ENCODE measurements at regions of chr19 and their contacts with region 1.

Region 1: GRCh38 chr19:9538183-9539058 is at the start of gene ZNF426:
- DNase-seq: peak; percentile 62 to 91 (median 80)
- ATAC-seq: peak; percentile 94
- H3K4me3 ChIP-seq: peak within 1 kb of the TSS; percentile 78
- H3K4me3 Mint-ChIP-seq: peak within 1 kb of the TSS; percentile 95
- H3K27ac ChIP-seq: peak within 1 kb of the TSS; percentile 64 to 84
- H3K27ac Mint-ChIP-seq: peak within 1 kb of the TSS; percentile 98
- H3K4me1 ChIP-seq: peaks cover 16% of the 10 kb centered on the region
- H3K4me1 Mint-ChIP-seq: peaks cover 32% of the 10 kb centered on the region
- H3K27me3 ChIP-seq: no peaks in the 10 kb centered on the region
- H3K27me3 Mint-ChIP-seq: no peaks in the 10 kb centered on the region
- CTCF ChIP-seq: no peak
- total RNA-seq, gene ZNF426: 14.9 to 15.3 TPM

Region 2: DNA sequence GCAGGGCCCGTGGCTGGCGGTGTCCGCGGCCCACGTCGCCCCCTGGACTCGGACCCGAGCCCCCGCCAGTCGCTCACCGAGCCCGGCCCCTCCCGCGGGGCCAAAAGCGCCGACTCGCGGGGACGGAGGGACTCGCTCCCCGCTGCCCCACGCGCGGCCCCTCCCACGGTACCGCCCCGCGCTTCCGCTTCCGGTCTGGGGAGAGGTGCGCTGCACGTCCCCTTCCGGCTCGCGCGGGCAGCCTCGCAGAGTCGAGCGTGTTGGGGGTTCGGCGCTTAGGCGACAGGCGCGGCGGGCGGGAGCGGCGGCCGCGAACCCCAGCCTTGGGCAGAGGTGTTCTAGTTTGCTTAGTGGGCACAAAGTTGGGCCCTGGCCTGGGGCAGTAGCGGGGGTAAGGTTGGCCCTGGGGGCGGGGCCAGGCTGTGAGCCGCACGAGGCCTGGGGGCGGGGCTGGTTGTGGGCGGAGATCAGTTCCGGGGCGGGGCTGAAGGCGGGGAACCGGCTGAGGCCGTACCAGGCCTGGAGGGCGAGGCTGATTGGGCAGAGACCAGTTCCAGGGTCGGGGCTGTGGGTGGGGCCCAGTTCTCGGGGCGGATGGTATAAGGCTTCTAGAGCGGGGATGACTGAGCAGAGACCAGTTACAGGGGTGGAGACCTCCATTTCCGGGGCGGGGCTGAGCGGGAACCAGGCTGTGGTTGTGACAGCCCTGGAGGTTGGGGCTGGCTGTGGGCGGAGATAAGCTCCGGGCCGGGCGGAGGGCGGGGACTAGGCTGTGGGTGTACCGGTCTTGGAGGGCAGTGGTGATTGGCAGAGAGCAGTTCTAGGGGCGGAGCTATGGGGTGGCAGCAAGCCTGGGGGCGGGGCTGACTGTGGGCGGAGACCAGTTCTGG is 706.0 kb before region 1 on chr19 and contains the starts of genes MBD3L1 and ZNF558:
- CTCF ChIA-PET with region 1: no interaction called
- POLR2A ChIA-PET with region 1: no interaction called
- intact Hi-C with region 1: loop called in 1 of 2 experiments (anchors 5 kb)
- DNase-seq: peak; percentile 95 to 100 (median 99)
- ATAC-seq: peak; percentile 88
- H3K4me3 ChIP-seq: peak within 1 kb of the TSS; percentile 90
- H3K4me3 Mint-ChIP-seq: peak within 1 kb of the TSS; percentile 97
- H3K27ac ChIP-seq: peak within 1 kb of the TSS; percentile 89 to 92
- H3K27ac Mint-ChIP-seq: peak within 1 kb of the TSS; percentile 95
- H3K4me1 ChIP-seq: peaks cover 15% of the 10 kb centered on the region
- H3K4me1 Mint-ChIP-seq: peaks cover 31% of the 10 kb centered on the region
- H3K27me3 ChIP-seq: no peaks in the 10 kb centered on the region
- H3K27me3 Mint-ChIP-seq: no peaks in the 10 kb centered on the region
- CTCF ChIP-seq: peak; percentile 48
- total RNA-seq, gene MBD3L1: not detected
- total RNA-seq, gene ZNF558: 22.2 to 23.3 TPM

Region 3: DNA sequence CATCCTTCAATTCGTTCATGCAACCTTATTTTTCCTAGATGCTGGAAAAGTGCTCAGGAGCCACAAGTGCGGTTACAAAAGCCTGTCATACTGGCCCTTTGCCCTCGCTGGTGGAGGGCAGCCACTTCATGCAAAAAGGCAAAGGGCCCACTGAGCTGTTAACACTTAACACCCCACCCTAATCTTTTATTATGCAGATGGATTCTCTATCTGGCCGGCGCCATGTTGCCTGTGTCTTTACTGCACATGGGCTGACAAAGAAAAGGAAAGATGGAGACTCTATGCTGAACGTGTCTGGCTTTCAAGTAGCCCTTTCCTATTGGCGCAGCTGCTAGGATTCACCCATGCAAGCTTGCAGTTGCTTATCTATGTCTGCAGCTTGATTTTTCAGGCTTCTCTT is 348.9 kb before region 1 on chr19:
- CTCF ChIA-PET with region 1: no interaction called
- POLR2A ChIA-PET with region 1: no interaction called
- intact Hi-C with region 1: no loop called
- DNase-seq: no peak
- ATAC-seq: no peak
- H3K4me3 ChIP-seq: no peak overlapping the region
- H3K4me3 Mint-ChIP-seq: no peak overlapping the region
- H3K27ac ChIP-seq: no peak overlapping the region
- H3K27ac Mint-ChIP-seq: no peak overlapping the region
- H3K4me1 ChIP-seq: no peaks in the 10 kb centered on the region
- H3K4me1 Mint-ChIP-seq: no peaks in the 10 kb centered on the region
- H3K27me3 ChIP-seq: peaks cover 0 to 4% of the 10 kb centered on the region in 2 experiments
- H3K27me3 Mint-ChIP-seq: peaks cover 48% of the 10 kb centered on the region
- CTCF ChIP-seq: no peak

Region 4: DNA sequence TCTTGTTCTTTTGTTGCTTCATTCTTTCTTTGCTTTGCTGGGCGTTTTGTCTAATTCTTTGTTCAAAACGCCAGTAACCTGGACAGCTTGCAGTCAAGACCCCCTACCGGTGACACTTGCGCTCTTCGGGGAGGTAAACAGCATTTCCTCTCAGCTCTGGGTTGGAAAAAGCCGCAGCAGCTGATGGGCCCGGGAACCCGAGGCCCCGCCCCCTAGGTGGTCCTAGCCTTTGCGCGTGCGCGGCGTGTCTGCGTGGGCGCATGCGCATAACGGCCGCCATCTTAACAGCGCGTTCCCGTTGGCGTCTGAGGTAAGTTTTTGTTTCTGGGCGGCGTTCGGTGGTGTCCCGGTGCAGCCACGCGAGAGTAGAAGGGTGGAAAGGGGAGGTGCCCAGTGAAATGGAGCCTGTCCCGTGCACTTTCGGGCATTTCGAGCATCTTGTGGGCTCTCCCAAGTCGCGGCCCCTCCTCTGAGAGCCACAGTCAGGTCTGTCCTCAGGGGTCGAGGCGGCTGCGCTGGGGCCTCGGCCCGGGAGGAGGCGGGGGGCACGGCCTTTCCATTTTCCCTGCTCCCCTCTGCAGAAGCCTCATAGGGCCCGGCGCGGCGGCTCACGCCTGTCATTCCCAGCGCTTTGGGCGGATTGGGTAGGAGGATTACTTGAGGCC is 214.4 kb before region 1 on chr19 and contains the start of gene ZNF559:
- CTCF ChIA-PET with region 1: no interaction called
- POLR2A ChIA-PET with region 1: no interaction called
- intact Hi-C with region 1: loop called in 1 of 2 experiments (anchors 10 kb)
- DNase-seq: peak; percentile 94 to 98 (median 97)
- ATAC-seq: peak; percentile 97
- H3K4me3 ChIP-seq: peak within 1 kb of the TSS; percentile 87
- H3K4me3 Mint-ChIP-seq: peak within 1 kb of the TSS; percentile 96
- H3K27ac ChIP-seq: peak within 1 kb of the TSS; percentile 80 to 83
- H3K27ac Mint-ChIP-seq: peak within 1 kb of the TSS; percentile 90
- H3K4me1 ChIP-seq: peaks cover 25% of the 10 kb centered on the region
- H3K4me1 Mint-ChIP-seq: peaks cover 33% of the 10 kb centered on the region
- H3K27me3 ChIP-seq: no peaks in the 10 kb centered on the region
- H3K27me3 Mint-ChIP-seq: no peaks in the 10 kb centered on the region
- CTCF ChIP-seq: peak; percentile 65
- total RNA-seq, gene ZNF559: 4.7 to 6.5 TPM

Region 5: DNA sequence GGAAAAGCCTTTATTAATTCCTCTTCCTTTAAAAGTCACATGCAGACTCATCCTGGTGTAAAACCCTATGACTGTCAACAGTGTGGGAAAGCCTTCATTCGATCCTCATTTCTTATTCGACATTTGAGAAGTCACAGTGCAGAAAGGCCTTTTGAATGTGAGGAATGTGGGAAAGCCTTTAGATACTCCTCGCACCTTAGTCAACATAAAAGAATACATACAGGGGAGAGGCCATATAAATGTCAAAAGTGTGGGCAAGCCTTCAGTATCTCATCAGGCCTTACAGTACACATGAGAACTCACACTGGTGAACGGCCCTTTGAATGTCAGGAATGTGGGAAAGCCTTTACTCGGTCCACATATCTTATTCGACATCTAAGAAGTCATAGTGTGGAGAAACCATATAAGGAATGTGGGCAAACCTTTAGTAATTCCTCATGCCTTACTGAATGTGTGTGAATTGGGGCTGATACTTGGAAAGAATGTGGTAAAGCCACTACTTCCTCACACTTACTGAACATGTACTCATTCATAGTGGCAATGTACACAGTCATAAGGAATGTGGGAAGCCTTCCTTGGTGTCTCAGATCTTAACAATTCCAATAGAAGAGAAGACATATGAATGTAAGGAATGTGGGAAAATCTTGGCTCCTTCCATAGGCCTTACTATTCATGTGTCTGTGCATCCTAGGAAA is 195.7 kb before region 1 on chr19:
- CTCF ChIA-PET with region 1: no interaction called
- POLR2A ChIA-PET with region 1: no interaction called
- intact Hi-C with region 1: no loop called
- DNase-seq: no peak
- ATAC-seq: no peak
- H3K4me3 ChIP-seq: no peak overlapping the region
- H3K4me3 Mint-ChIP-seq: no peak overlapping the region
- H3K27ac ChIP-seq: no peak overlapping the region
- H3K27ac Mint-ChIP-seq: no peak overlapping the region
- H3K4me1 ChIP-seq: no peaks in the 10 kb centered on the region
- H3K4me1 Mint-ChIP-seq: no peaks in the 10 kb centered on the region
- H3K27me3 ChIP-seq: no peaks in the 10 kb centered on the region
- H3K27me3 Mint-ChIP-seq: no peaks in the 10 kb centered on the region
- CTCF ChIP-seq: no peak

Region 6: DNA sequence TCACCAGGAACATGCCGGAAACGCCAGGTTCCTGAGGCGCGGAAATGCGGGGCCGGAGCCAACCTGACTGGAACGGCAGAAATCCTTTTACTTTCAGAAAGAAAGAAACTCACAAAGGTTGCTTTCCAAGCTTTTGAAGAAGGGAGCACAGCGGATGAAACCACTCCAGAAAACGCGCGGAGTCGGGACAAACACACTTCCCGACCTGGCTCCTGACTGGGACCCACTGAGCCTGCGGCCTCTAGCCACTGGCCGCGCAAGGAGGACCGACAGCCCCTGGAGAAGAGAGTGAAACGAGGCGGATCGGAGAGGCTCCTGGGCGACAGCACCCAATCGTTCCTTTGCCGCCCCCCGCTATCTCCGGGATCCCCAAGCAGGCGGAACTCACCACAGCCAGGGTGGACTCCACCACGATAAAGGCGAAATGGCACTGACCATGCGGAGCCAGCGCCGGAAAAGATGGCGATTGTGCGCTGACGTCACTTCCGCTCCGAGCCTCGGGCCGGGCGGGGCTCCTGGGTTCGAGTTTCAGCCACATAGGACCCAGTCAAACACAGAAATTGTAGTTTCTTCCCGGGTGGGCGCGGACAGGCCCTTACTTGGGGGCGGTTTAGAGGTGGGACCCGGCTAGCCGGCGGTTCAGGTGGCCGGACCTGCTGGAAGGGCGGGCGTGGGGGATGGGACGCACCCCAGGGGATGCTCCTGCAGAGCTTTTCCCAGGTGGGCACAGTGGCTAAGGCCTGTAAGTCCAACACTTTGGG is 45.8 kb after region 1 on chr19 and contains the start of gene ZNF121:
- CTCF ChIA-PET with region 1: no interaction called
- POLR2A ChIA-PET with region 1: no interaction called
- intact Hi-C with region 1: loop called in 1 of 2 experiments (anchors 10 kb)
- DNase-seq: peak; percentile 53 to 88 (median 68)
- ATAC-seq: peak; percentile 70
- H3K4me3 ChIP-seq: peak within 1 kb of the TSS; percentile 82
- H3K4me3 Mint-ChIP-seq: peak within 1 kb of the TSS; percentile 98
- H3K27ac ChIP-seq: peak within 1 kb of the TSS; percentile 92 to 93
- H3K27ac Mint-ChIP-seq: peak within 1 kb of the TSS; percentile 98
- H3K4me1 ChIP-seq: peaks cover 23% of the 10 kb centered on the region
- H3K4me1 Mint-ChIP-seq: peaks cover 36% of the 10 kb centered on the region
- H3K27me3 ChIP-seq: no peaks in the 10 kb centered on the region
- H3K27me3 Mint-ChIP-seq: peaks cover 5% of the 10 kb centered on the region
- CTCF ChIP-seq: no peak
- total RNA-seq, gene ZNF121: 42.0 to 42.1 TPM